ENCODE measurements at regions of chr9 and their contacts with region 1.

Region 1: DNA sequence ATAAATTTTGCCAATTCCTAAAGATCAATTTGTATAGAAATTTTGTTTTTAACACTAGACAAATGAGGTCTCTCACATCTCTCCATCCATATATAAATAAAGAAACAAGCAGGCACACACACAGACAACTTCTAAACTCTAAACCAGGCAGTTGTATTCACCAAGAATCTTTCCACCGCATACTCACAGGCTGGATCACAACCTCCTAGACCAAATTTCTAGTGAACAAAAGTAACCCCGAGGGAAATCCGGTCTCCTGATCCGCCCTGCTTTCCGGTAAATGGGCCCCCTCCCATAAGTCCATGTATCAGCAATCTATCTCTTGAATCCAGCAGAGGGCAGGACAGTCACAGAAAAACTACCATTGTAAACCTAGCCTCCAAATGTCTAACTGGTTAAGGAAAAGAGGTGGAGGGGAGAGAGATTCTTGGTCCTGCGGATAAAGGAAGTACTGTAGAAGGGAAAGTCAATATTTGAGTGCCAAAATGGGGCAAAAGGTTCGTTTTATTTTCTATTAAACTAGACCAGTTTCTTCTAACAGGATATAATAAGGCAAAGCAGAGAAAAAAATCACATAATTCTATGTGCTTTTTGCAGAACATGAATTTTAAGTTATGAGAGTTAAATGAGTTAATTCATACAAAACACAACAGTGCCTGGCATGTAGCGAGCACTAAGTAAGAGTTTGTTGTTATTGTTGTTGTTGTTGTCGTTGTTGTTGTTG is 4.8 kb upstream of the SMU1 start:
- DNase-seq: peak; percentile 82
- H3K4me3 Mint-ChIP-seq: no peak overlapping the region
- H3K27ac Mint-ChIP-seq: no peak overlapping the region
- H3K4me1 Mint-ChIP-seq: peaks cover 38% of the 10 kb centered on the region
- H3K27me3 Mint-ChIP-seq: peaks cover 7% of the 10 kb centered on the region

Region 2: GRCh38 chr9:32928145-32928763 is 153.0 kb before region 1 on chr9:
- CTCF ChIA-PET with region 1: no interaction called
- DNase-seq: no peak
- H3K4me3 Mint-ChIP-seq: no peak overlapping the region
- H3K27ac Mint-ChIP-seq: no peak overlapping the region
- H3K4me1 Mint-ChIP-seq: no peaks in the 10 kb centered on the region
- H3K27me3 Mint-ChIP-seq: peaks cover 10% of the 10 kb centered on the region

Region 3: DNA sequence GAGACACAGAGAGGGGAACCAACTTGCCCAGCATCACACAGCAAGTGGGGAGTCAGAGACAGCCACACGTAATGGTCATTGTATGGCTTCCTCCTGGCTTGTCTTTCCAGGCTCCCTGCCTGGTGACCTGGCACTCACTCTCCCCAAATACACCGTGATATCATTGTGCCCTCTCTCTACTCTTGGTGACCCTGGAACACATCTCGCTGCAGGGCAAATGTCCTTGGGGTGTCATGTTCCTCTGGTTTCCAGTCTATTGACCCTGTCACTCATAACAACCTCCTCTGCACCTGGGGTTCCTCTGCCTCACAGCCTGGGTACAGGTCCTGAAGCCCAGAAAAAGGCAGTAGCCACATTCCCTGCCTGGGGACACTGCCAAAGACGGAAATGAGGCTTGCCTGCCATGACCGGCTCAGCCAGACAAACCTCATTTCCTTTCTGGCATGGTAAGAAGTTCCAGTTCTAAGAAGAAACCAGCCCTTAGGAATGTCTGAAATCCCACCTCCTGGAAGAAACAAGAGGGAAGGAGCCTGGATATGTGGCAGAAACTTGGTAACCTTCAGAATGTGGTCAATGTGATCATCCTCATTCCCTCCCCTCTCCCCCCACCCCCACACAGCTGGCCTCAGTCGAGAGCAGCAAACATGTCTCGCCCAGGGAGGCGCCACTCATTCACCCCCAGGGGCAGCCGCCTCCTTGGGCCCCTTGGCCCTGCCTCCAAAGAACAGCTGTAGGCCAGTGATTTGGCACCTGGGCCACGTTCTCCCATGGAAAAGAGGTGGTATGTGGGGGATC is 25.7 kb after region 1 on chr9:
- CTCF ChIA-PET with region 1: no interaction called
- DNase-seq: no peak
- H3K4me3 Mint-ChIP-seq: no peak overlapping the region
- H3K27ac Mint-ChIP-seq: no peak overlapping the region
- H3K4me1 Mint-ChIP-seq: no peaks in the 10 kb centered on the region
- H3K27me3 Mint-ChIP-seq: peaks cover 12% of the 10 kb centered on the region

Region 4: DNA sequence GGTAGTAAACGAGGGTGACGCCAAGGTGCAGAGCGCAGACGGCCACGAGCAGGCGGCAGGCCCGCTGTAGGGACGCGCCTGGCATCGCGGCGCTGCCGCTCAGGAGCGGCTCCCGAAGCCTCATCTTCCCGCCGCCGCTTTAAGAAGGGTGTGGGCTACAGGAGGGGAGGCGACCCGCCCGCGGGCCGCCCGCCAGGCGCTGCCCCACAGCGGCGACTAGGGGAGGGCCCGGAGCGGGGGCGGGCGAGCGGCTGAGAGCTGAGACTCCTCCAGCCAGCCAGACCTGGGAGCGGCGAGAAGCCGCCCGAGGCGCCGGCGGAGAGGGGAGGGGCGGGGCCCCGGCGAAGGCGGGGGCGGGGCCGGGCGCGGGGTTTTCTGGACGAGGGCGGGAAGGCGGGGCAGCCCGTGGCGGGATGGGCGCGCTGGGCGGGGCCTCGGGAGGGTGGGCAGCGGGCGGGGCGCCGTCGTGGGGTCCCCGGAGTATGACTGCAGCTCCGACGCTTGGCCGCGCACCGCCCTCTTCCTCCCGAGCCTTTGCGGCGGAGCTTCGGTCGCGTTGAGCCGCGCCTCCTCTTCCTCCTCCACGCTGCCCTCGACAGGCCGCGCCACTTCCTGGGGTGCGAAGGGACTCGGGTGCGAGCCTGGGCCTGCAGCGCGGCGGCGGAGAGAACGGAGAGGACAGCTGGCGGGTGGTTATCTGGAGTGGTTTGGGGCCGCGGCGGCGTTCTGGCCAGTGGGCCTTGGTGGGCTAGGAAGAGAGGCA is 85.9 kb after region 1 on chr9 and contains the start of gene B4GALT1:
- CTCF ChIA-PET with region 1: interaction called, 32 read pairs
- DNase-seq: peak; percentile 97
- H3K4me3 Mint-ChIP-seq: peak within 1 kb of the TSS; percentile 92
- H3K27ac Mint-ChIP-seq: peak within 1 kb of the TSS; percentile 97
- H3K4me1 Mint-ChIP-seq: peaks cover 71% of the 10 kb centered on the region
- H3K27me3 Mint-ChIP-seq: no peaks in the 10 kb centered on the region

Region 5: DNA sequence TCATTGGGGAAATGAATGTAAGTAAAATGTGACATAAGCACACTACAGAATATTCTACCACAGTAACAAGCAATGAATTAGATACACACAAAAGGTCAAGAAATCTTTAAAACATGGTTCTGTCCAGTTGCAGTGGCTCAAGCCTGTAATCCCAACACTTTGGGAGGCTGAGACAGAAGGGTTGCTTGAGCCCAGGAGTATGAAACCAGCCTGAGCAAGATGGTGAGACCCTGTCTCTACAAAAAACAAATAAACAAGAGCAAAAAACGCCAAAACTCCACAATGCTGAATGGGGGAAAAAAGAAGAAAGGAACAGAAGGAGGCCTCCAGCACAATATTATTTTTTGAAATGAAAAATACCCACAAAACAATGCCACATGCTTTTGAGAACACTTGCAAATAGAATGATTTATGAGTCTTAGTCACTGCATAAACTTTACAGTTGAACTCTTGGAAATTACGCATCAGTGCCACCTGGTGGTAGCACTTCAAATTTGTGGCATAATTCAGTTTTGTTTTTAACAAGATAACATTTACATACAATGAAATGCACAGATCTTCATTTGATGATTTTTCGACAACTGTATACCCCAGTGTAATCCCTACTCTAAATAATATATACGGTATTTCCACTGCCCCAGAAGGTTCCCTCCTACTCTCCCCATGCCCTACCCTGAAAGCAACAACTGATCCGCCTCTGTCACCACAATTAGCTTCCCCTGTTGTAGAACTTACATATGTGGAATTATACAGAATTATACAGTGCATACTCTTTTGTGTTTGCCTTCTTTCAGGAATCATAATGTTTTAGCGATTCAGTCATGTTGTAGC is 144.2 kb after region 1 on chr9:
- CTCF ChIA-PET with region 1: interaction called, 17 read pairs
- DNase-seq: peak; percentile 83
- H3K4me3 Mint-ChIP-seq: no peak overlapping the region
- H3K27ac Mint-ChIP-seq: peak overlapping the region; percentile 16
- H3K4me1 Mint-ChIP-seq: peaks cover 38% of the 10 kb centered on the region
- H3K27me3 Mint-ChIP-seq: peaks cover 20% of the 10 kb centered on the region

Measured in activated naive CD4-positive, alpha-beta T cell treated with anti-CD3 and anti-CD28 coated beads, Interleukin-2, amount 10 ng/mL, durations not matched to agents 7 days and 5 days (primary cell).